H1 (cell line): ENCODE measurements at regions of chr6 and their contacts with region 1.

Region 1: GRCh38 chr6:160137989-160138835 is 16.6 kb downstream of the SLC22A1 start:
- DNase-seq: peak in 1 of 2 experiments; percentile 71
- H3K4me3 ChIP-seq: no peak overlapping the region
- H3K27ac ChIP-seq: no peak overlapping the region
- H3K4me1 ChIP-seq: peaks cover 2 to 19% (median 3%) of the 10 kb centered on the region in 4 experiments; a peak in 5 of 7 replicates
- H3K27me3 ChIP-seq: no peaks in the 10 kb centered on the region; a peak in 1 of 7 replicates
- CTCF ChIP-seq: peak; percentile 23 to 78 (median 72)
- EP300 ChIP-seq: no peak
- POLR2A ChIP-seq: no peak
- RAD21 ChIP-seq: peak; percentile 81 to 85

Region 2: DNA sequence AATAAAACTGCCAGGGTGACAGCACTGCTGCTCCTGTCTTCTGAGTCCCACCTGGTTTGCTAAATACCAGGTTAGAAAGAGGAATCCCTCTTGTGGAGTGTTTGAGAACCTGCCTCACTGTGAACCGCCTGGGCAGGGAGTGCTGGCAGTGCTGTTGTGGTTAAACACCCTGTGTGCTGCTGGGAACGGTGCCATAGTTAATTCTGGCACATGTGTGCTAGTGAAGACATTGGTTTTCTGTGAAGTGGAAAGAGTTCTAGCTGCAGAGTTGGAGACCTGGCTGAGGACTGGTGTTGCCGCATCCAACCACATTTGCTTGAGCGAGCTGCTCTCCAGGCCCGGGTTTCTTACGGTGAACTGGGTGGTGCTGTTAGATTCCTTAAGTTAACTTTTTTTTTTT is 96.6 kb before region 1 on chr6:
- CTCF ChIA-PET with region 1: no interaction called
- POLR2A ChIA-PET with region 1: no interaction called
- DNase-seq: no peak
- H3K4me3 ChIP-seq: no peak overlapping the region
- H3K27ac ChIP-seq: no peak overlapping the region
- H3K4me1 ChIP-seq: no peaks in the 10 kb centered on the region
- H3K27me3 ChIP-seq: no peaks in the 10 kb centered on the region
- CTCF ChIP-seq: no peak
- EP300 ChIP-seq: no peak
- POLR2A ChIP-seq: no peak
- RAD21 ChIP-seq: no peak

Region 3: DNA sequence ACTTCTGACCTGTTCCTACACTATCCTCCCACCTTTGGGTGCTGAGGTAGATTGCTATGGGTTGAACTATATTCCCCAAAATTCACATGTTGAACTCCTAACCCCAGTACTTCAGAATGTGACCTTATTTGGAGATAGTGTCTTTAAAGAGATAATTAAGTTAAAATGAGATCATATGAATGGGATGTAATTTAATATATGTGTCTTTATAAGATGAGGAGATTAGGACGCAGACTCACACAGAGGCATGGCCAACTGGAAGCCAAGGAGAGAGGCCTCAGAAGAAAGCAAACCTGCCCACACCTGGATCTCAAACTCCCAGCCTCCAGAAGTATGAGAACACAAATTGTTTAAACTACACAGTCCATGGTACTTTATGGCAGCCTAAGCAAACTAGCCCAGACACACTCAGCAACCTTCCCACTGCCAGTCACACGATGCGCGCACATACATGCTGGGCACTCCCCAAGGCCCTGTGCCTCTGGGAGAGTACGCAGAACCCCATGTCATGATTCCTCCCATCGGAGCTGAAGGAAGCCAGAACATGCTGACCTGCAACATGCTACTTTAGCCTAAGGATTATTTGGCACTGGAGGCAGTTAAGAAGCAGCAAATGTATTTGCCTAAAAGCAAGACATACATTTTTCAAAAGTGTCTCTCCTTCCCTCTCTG is 25.4 kb before region 1 on chr6:
- CTCF ChIA-PET with region 1: interaction called, 24 read pairs
- POLR2A ChIA-PET with region 1: no interaction called
- DNase-seq: no peak
- H3K4me3 ChIP-seq: no peak overlapping the region
- H3K27ac ChIP-seq: no peak overlapping the region
- H3K4me1 ChIP-seq: peaks cover 0 to 7% (median 1%) of the 10 kb centered on the region in 4 experiments; a peak in 1 of 7 replicates
- H3K27me3 ChIP-seq: no peaks in the 10 kb centered on the region
- CTCF ChIP-seq: no peak
- EP300 ChIP-seq: no peak
- POLR2A ChIP-seq: no peak
- RAD21 ChIP-seq: no peak

Region 4: DNA sequence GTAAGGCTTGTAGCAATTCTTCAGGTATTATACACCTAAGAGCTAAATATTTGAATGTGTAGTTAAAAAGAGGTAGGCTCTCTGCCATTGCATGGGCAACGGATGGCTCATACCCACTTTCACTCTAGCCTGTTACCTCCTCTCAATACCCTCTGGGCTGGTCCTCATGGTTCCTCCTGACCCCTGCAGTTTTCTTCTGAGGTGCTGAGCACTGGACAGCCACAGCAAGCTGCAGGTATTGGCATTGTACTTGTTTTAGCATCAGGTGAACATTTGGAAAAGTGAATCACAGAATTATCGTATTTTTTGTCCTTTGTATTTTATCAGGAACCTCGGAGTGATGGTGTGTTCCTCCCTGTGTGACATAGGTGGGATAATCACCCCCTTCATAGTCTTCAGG is 16.3 kb after region 1 on chr6:
- CTCF ChIA-PET with region 1: interaction called, 11 read pairs
- POLR2A ChIA-PET with region 1: no interaction called
- DNase-seq: no peak
- H3K4me3 ChIP-seq: no peak overlapping the region
- H3K27ac ChIP-seq: no peak overlapping the region
- H3K4me1 ChIP-seq: no peaks in the 10 kb centered on the region
- H3K27me3 ChIP-seq: no peaks in the 10 kb centered on the region
- CTCF ChIP-seq: no peak
- EP300 ChIP-seq: no peak
- POLR2A ChIP-seq: no peak
- RAD21 ChIP-seq: no peak

Region 5: GRCh38 chr6:160221423-160221822 is 83.2 kb after region 1 on chr6:
- CTCF ChIA-PET with region 1: interaction called, 18 read pairs
- POLR2A ChIA-PET with region 1: no interaction called
- DNase-seq: no peak
- H3K4me3 ChIP-seq: no peak overlapping the region
- H3K27ac ChIP-seq: no peak overlapping the region
- H3K4me1 ChIP-seq: peaks cover 7 to 18% (median 15%) of the 10 kb centered on the region in 4 experiments; a peak in 4 of 7 replicates
- H3K27me3 ChIP-seq: no peaks in the 10 kb centered on the region
- CTCF ChIP-seq: peak in 2 of 3 experiments; percentile 38 to 54; a peak in 2 of 4 replicates
- EP300 ChIP-seq: no peak
- POLR2A ChIP-seq: no peak
- RAD21 ChIP-seq: peak; percentile 74 to 81

Region 6: DNA sequence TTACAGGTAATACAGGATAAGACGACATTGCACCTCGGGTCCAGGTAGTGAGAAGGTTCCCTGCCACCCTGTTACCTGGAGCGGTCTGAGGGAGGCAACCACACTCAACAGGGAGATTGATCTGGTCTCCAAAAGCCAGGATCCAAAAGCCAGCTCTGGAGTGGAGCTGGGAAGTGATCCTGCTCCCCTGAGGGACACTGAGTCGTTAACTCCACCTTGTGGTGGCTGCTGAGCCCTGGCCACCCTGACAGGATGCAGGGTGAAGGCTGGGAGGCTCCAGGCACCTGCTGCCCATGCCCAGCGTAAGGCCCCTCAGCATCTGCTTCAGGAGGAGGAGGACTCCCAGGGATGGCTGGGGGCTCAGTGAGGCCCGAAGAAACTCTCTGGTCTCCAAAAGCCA is 159.1 kb after region 1 on chr6:
- CTCF ChIA-PET with region 1: interaction called, 37 read pairs
- POLR2A ChIA-PET with region 1: no interaction called
- DNase-seq: peak in 1 of 2 experiments; percentile 19
- H3K4me3 ChIP-seq: no peak overlapping the region
- H3K27ac ChIP-seq: no peak overlapping the region
- H3K4me1 ChIP-seq: peaks cover 0 to 9% (median 6%) of the 10 kb centered on the region in 4 experiments; a peak in 4 of 7 replicates
- H3K27me3 ChIP-seq: no peaks in the 10 kb centered on the region
- CTCF ChIP-seq: peak; percentile 71 to 82 (median 76)
- EP300 ChIP-seq: no peak
- POLR2A ChIP-seq: no peak
- RAD21 ChIP-seq: peak; percentile 81 to 89